ENCODE measurements at regions of chr15 and their contacts with region 1.

Region 1: DNA sequence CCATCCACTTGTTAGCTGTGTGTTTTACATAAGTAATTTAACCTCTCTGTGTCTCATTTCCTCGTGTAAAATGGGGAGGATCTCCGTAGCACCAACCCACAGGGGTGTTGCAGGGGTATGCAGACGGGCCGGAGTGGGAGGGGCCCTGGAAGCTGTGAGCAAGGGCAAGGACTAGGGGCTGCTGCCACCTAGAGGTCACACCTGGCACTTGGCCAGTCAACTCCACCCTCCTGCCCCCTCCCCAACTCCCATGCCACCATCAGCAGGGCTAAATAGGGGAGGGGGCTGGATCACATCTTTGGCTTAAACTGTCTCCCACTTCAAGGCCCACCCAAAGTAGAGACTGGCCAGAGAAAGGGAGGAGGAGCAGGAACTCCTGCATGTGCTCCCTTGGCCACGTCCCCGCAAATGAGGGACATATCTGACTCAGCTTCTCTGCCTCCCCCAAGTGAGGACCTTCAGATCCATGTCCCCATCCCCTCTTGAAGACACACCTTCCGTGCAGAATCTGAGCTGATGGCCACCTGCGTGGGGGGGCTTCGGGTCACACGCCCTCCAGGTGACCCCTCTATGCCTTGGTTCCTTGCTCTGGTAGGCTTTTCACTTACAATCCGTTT is 2.6 kb downstream of the CCDC9B start:
- DNase-seq: peak; percentile 78
- H3K27ac ChIP-seq: peak overlapping the region; percentile 99
- CTCF ChIP-seq: peak; percentile 88

Region 2: GRCh38 chr15:40323239-40323952 is 14.8 kb before region 1 on chr15 and contains the start of gene INAFM2:
- CTCF ChIA-PET with region 1: interaction called, 34 read pairs
- POLR2A ChIA-PET with region 1: interaction called, 3 read pairs
- DNase-seq: peak; percentile 90
- H3K27ac ChIP-seq: peak within 1 kb of the TSS; percentile 69
- CTCF ChIP-seq: no peak; the same call in 1 of the 2 replicates

Region 3: GRCh38 chr15:40421246-40422157 is 83.4 kb after region 1 on chr15:
- CTCF ChIA-PET with region 1: interaction called, 13 read pairs
- POLR2A ChIA-PET with region 1: no interaction called
- DNase-seq: peak; percentile 69
- H3K27ac ChIP-seq: peak overlapping the region; percentile 67
- CTCF ChIP-seq: peak; percentile 95

Region 4: GRCh38 chr15:40525855-40526254 is 187.7 kb after region 1 on chr15:
- CTCF ChIA-PET with region 1: no interaction called
- POLR2A ChIA-PET with region 1: no interaction called
- DNase-seq: no peak
- H3K27ac ChIP-seq: no peak overlapping the region
- CTCF ChIP-seq: no peak

Measured in RWPE1 (cell line).